Posterior cingulate gyrus (tissue), 11 donors: ENCODE measurements at regions of chr16 and their contacts with region 1.

Region 1: GRCh38 chr16:88941913-88942909 is 34.8 kb downstream of the CBFA2T3 start:
- DNase-seq: peak in 3 of 10 donors; percentile 45 to 50 (median 48)

Region 2: DNA sequence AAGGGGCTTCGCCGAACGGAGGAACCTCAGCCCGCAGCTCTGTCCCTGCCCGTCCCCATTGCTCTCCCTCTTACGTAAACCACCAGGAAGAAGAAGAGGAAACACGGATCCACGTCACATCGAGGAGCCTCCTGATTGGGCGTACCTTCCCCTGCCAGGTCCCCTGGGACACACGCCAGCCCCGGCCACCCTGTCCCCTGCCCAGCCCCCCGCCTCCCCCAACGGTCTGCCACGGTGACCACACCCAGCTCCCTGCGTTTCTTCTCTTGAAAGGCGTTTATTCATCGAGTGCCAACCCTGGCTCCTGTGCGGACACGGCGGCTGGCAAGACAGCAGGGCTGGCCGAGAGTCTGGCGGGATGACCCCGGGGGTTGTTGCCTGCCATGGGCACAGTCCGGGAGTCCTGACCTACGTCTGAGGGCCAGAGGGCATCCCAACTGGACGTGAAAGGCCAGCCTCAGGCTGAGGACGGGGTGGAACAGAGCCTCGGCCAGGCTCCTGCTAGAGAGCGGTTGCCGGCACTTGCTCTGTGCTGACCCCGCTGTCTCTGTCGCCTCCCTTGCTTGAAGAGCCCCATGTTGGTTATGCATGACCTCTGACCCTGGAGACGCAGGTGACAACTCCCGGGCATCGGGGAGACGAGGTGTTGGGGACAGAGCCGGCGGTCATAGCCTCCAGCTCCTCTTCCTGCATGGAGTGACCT is 110.8 kb after region 1 on chr16:
- intact Hi-C with region 1: loop called (anchors 10 kb)
- DNase-seq: peak; percentile 34 to 94 (median 72)

Region 3: GRCh38 chr16:89184933-89185794 is 243.0 kb after region 1 on chr16:
- intact Hi-C with region 1: no loop called
- DNase-seq: no peak

Region 4: DNA sequence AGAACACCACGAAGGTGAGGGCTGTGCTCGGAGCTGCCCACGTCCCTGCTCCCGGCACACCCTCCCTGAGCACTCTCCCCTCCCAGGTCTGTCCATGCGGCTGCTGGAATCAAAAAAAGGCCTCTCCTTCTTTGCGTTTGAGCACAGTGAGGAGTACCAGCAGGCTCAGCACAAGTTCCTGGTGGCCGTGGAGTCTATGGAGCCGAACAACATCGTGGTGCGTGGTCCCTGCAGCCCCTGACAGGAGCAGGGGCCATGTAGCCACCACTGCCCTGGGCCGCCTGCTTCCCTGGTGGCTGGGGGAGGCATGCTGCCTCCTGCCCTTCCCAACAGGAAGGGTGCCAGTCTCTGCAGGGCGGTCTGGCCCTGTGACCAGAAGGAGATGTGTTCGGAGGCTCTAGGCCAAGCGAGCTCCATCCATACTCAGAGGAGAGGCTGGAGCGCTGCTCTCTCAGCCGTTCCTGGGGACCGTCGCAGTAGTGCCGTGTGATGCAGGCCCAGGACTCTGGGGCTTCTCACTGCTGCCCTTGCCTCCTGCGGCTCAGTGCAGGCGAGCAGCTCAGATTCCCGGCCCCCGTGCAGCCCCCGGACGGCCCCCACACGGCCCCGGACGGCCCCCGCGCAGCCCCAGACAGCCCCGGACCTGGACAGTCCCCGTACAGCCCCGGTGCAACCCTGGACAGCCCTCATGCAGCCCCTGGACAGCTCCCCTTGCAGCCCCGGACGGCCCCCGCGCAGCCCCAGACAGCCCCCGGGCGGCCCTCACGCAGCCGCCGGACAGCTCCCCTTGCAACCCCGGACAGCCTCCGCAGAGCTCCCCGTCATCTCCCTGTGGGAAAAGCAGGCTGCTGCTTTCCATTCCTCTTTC is 951.7 kb after region 1 on chr16:
- intact Hi-C with region 1: no loop called
- DNase-seq: no peak